ENCODE measurements at regions of chr14 and their contacts with region 1.

Region 1: DNA sequence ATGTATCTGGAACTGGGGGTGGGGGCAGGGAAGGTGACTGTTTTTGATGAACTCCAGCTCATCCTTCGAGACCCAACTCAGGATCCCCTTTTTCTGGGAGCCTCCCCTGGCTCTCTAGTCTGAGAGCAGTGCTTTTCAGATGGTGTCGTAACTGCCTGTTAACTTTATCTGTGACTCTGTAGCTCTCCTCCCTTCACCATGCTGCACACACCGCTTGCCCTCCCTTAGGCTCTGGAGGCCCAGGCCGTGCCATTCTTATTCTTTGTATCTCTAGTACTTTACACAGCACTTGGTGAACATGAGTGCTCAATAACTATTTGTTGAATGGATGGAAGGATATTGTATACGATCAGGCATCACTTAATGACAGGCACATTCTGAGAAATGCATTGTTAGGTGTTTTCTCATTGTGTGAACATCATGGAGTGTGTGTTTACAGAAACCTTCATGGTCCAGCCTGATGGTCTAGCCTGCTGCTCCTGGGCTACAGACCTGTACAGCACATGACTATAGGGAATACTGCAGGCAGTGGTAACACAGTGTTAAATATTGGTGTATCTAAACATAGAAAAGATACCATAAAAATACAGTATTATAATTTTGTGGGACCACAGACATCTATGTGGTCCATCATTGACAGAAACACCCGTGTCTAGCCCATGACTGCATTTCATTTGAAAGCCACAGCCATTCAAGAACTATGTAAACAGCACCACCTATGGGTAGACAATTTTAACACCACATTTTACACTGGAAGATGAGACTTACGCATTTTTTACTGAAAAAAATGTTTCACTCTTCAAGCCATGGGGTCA is 91.8 kb downstream of the EML1 start:
- DNase-seq: peak; percentile 40
- ATAC-seq: peak; percentile 85
- H3K4me3 ChIP-seq: no peak overlapping the region
- H3K27ac ChIP-seq: no peak overlapping the region
- H3K4me1 ChIP-seq: no peaks in the 10 kb centered on the region
- H3K27me3 ChIP-seq: peaks cover 5% of the 10 kb centered on the region; the same call in 1 of the 2 replicates
- CTCF ChIP-seq: peak; percentile 56 to 90 (median 82)
- POLR2A ChIP-seq: no peak
- RAD21 ChIP-seq: peak; percentile 89

Region 2: GRCh38 chr14:99393047-99393655 is 491.9 kb before region 1 on chr14:
- CTCF ChIA-PET with region 1: no interaction called
- POLR2A ChIA-PET with region 1: no interaction called
- RAD21 ChIA-PET with region 1: no interaction called
- intact Hi-C with region 1: loop called (anchors 5 kb)
- DNase-seq: peak; percentile 15
- ATAC-seq: peak; percentile 83
- H3K4me3 ChIP-seq: no peak overlapping the region
- H3K27ac ChIP-seq: no peak overlapping the region
- H3K4me1 ChIP-seq: peaks cover 0 to 12% of the 10 kb centered on the region in 2 experiments; a peak in 2 of 4 replicates
- H3K27me3 ChIP-seq: no peaks in the 10 kb centered on the region
- CTCF ChIP-seq: peak; percentile 34 to 97 (median 94); a peak in 5 of 6 replicates
- POLR2A ChIP-seq: no peak
- RAD21 ChIP-seq: peak; percentile 43; the same call in 1 of the 2 replicates

Region 3: DNA sequence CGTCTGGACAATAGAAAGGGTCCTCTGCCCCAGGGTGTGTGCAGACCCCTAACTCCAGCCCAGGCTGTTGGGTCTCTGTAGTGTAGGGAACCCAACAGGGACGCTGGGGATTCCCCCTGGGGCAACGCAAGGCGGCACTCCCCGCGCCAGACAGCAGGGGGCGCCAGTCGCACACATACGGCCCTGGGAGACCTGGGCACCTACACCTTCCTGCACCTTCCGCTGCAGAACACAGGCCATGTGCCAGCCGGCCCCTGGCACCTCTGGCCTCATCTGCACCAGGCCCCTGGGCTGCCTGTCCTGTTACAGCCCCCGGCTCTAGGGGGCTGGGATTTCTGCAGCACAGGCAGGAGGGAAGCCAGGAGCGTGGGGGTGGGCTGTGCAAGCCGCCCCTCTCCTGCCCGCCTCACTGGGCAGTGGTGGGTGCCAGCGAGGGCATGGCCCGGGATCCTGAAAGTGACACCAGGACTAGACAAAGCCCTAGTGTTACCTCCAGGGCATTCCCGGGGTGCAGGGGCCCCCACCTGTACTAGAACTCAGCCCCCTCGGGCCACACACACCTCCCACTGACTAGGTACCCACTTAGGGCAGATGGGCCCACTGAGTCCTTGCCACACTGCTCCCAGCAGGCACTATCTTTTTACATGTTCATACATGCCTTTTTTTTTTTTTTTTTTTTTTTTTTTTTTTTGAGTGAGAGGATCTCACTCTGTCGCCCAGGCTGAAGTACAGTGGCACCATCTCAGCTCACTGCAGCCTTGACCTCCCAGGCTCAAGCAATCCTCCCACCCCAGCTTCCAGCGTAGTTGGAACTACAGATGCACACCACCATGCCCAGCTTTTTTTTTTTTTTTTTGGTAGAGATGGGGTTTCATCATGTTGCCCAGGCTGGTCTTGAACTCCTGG is 366.3 kb before region 1 on chr14:
- CTCF ChIA-PET with region 1: no interaction called
- POLR2A ChIA-PET with region 1: no interaction called
- RAD21 ChIA-PET with region 1: no interaction called
- intact Hi-C with region 1: loop called (anchors 1 kb)
- DNase-seq: peak; percentile 23
- ATAC-seq: peak; percentile 86
- H3K4me3 ChIP-seq: no peak overlapping the region
- H3K27ac ChIP-seq: no peak overlapping the region
- H3K4me1 ChIP-seq: peaks cover 0 to 6% of the 10 kb centered on the region in 2 experiments; a peak in 2 of 4 replicates
- H3K27me3 ChIP-seq: no peaks in the 10 kb centered on the region
- CTCF ChIP-seq: peak; percentile 90 to 95 (median 93)
- POLR2A ChIP-seq: no peak
- RAD21 ChIP-seq: peak; percentile 98

Region 4: GRCh38 chr14:99683619-99684355 is 201.3 kb before region 1 on chr14 and contains the start of gene CYP46A1:
- CTCF ChIA-PET with region 1: interaction called, 5 read pairs
- POLR2A ChIA-PET with region 1: no interaction called
- RAD21 ChIA-PET with region 1: interaction called in 1 of 2 experiments, 3 read pairs
- intact Hi-C with region 1: loop called (anchors 1 kb)
- DNase-seq: peak; percentile 97
- ATAC-seq: peak; percentile 88
- H3K4me3 ChIP-seq: peak within 1 kb of the TSS; percentile 65 to 96
- H3K27ac ChIP-seq: peak within 1 kb of the TSS; percentile 76
- H3K4me1 ChIP-seq: peaks cover 4 to 26% of the 10 kb centered on the region in 2 experiments; a peak in 2 of 4 replicates
- H3K27me3 ChIP-seq: no peaks in the 10 kb centered on the region
- CTCF ChIP-seq: no peak
- POLR2A ChIP-seq: no peak
- RAD21 ChIP-seq: no peak
- total RNA-seq, gene CYP46A1: 0.76 TPM

Region 5: DNA sequence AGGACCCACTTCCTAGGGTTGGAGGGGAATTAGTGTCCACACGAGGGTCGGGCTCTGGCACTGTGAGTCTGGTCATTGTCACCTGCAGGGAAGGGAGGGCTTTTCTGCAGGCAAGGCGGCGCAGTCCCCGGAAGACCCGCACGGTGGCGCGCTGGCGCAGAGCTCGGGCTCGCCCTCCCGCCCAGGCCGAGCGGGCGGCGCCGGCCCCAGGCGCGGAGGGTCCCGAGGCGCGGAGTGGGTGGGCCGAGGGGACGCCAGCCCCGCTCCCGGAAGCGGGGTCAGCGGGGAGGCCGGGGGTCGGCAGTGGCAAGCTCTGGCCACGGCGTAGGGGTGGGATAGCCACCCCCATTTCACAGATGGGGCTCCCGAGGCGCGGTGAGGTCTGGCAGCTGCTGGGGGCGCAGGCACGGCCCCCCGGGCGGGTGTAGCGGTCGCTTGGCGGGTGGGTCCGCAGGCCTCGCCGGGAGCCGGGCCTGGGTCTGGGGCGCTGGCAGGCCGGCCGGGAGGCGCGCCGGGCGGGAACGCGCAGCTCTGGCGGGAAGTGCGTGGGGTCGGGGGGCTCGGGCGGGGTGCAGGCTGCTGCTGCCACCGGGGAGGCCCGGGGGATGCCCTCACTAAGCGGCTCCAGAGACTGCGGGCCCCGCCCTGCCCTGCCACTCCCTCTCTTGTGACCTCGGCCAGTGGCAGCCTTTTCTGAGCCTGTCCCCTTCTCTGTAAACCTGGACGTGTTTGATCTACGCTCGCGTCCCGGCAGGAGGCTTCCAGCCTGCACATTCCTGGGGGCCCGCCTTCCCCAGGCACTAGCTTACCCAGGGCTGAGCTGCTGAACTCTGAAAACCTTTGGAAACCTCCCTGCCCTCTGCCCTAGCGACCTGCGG is 154.8 kb before region 1 on chr14:
- CTCF ChIA-PET with region 1: interaction called, 4 read pairs
- POLR2A ChIA-PET with region 1: no interaction called
- RAD21 ChIA-PET with region 1: interaction called in 1 of 2 experiments, 3 read pairs
- intact Hi-C with region 1: loop called (anchors 1 kb)
- DNase-seq: no peak
- ATAC-seq: peak; percentile 91
- H3K4me3 ChIP-seq: peak overlapping the region; percentile 26 to 49
- H3K27ac ChIP-seq: peak overlapping the region; percentile 8; the same call in 1 of the 2 replicates
- H3K4me1 ChIP-seq: peaks cover 6 to 11% of the 10 kb centered on the region in 2 experiments; a peak in 2 of 4 replicates
- H3K27me3 ChIP-seq: no peaks in the 10 kb centered on the region
- CTCF ChIP-seq: peak; percentile 44 to 82 (median 79); a peak in 5 of 6 replicates
- POLR2A ChIP-seq: no peak
- RAD21 ChIP-seq: peak; percentile 76

Region 6: GRCh38 chr14:99896384-99896783 is 11.3 kb after region 1 on chr14:
- CTCF ChIA-PET with region 1: interaction called, 10 read pairs
- POLR2A ChIA-PET with region 1: no interaction called
- RAD21 ChIA-PET with region 1: no interaction called
- intact Hi-C with region 1: no loop called
- DNase-seq: no peak
- ATAC-seq: no peak
- H3K4me3 ChIP-seq: no peak overlapping the region
- H3K27ac ChIP-seq: no peak overlapping the region
- H3K4me1 ChIP-seq: no peaks in the 10 kb centered on the region
- H3K27me3 ChIP-seq: no peaks in the 10 kb centered on the region
- CTCF ChIP-seq: no peak
- POLR2A ChIP-seq: no peak
- RAD21 ChIP-seq: no peak